ENCODE measurements at regions of chr5 and their contacts with region 1.

Region 1: GRCh38 chr5:136174021-136174659 is 18.8 kb downstream of the SMIM32 start:
- DNase-seq: peak; percentile 69
- H3K4me3 Mint-ChIP-seq: no peak overlapping the region
- H3K27ac Mint-ChIP-seq: no peak overlapping the region
- H3K4me1 Mint-ChIP-seq: peaks cover 4% of the 10 kb centered on the region
- H3K27me3 Mint-ChIP-seq: no peaks in the 10 kb centered on the region
- CTCF ChIP-seq: peak; percentile 91

Region 2: GRCh38 chr5:135944967-135945560 is 229.1 kb before region 1 on chr5:
- CTCF ChIA-PET with region 1: interaction called, 17 read pairs
- POLR2A ChIA-PET with region 1: no interaction called
- intact Hi-C with region 1: loop called (anchors 1 kb)
- DNase-seq: peak; percentile 94
- H3K4me3 Mint-ChIP-seq: no peak overlapping the region
- H3K27ac Mint-ChIP-seq: no peak overlapping the region
- H3K4me1 Mint-ChIP-seq: no peaks in the 10 kb centered on the region
- H3K27me3 Mint-ChIP-seq: no peaks in the 10 kb centered on the region
- CTCF ChIP-seq: peak; percentile 80

Region 3: GRCh38 chr5:136073714-136074529 is 100.2 kb before region 1 on chr5:
- CTCF ChIA-PET with region 1: interaction called, 12 read pairs
- POLR2A ChIA-PET with region 1: interaction called, 3 read pairs
- intact Hi-C with region 1: no loop called
- DNase-seq: no peak
- H3K4me3 Mint-ChIP-seq: no peak overlapping the region
- H3K27ac Mint-ChIP-seq: no peak overlapping the region
- H3K4me1 Mint-ChIP-seq: peaks cover 16% of the 10 kb centered on the region
- H3K27me3 Mint-ChIP-seq: no peaks in the 10 kb centered on the region
- CTCF ChIP-seq: no peak

Region 4: GRCh38 chr5:136123236-136123768 is 50.8 kb before region 1 on chr5:
- CTCF ChIA-PET with region 1: interaction called, 17 read pairs
- POLR2A ChIA-PET with region 1: no interaction called
- intact Hi-C with region 1: no loop called
- DNase-seq: peak; percentile 76
- H3K4me3 Mint-ChIP-seq: no peak overlapping the region
- H3K27ac Mint-ChIP-seq: no peak overlapping the region
- H3K4me1 Mint-ChIP-seq: peaks cover 15% of the 10 kb centered on the region
- H3K27me3 Mint-ChIP-seq: no peaks in the 10 kb centered on the region
- CTCF ChIP-seq: no peak

Region 5: DNA sequence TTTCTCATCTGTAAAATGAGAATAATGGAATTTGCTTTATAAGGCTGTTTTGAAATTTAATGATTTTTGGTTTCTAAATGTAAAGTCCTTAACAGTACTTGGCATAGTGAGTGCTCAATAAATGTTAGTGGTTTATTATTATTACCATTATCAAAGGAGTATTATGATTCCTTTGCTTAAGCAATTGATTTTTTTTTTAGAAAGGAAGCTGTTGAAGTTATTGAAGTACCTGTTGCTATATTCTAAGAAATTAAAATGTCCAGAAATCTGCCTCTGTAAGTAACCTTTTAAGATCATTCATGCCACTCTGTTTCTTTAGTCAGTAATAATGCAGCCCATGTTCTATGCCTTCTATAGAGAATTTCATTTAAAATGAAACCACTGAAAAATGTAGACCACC is 26.5 kb before region 1 on chr5:
- CTCF ChIA-PET with region 1: interaction called, 14 read pairs
- POLR2A ChIA-PET with region 1: interaction called, 3 read pairs
- intact Hi-C with region 1: no loop called
- DNase-seq: no peak
- H3K4me3 Mint-ChIP-seq: no peak overlapping the region
- H3K27ac Mint-ChIP-seq: no peak overlapping the region
- H3K4me1 Mint-ChIP-seq: peaks cover 42% of the 10 kb centered on the region
- H3K27me3 Mint-ChIP-seq: no peaks in the 10 kb centered on the region
- CTCF ChIP-seq: no peak

Region 6: GRCh38 chr5:136212252-136212721 is 38.1 kb after region 1 on chr5:
- CTCF ChIA-PET with region 1: interaction called, 15 read pairs
- POLR2A ChIA-PET with region 1: interaction called, 3 read pairs
- intact Hi-C with region 1: no loop called
- DNase-seq: peak; percentile 73
- H3K4me3 Mint-ChIP-seq: no peak overlapping the region
- H3K27ac Mint-ChIP-seq: no peak overlapping the region
- H3K4me1 Mint-ChIP-seq: peaks cover 5% of the 10 kb centered on the region
- H3K27me3 Mint-ChIP-seq: peaks cover 13% of the 10 kb centered on the region
- CTCF ChIP-seq: peak; percentile 96